ENCODE measurements at regions of chr4 and their contacts with region 1.

Region 1: DNA sequence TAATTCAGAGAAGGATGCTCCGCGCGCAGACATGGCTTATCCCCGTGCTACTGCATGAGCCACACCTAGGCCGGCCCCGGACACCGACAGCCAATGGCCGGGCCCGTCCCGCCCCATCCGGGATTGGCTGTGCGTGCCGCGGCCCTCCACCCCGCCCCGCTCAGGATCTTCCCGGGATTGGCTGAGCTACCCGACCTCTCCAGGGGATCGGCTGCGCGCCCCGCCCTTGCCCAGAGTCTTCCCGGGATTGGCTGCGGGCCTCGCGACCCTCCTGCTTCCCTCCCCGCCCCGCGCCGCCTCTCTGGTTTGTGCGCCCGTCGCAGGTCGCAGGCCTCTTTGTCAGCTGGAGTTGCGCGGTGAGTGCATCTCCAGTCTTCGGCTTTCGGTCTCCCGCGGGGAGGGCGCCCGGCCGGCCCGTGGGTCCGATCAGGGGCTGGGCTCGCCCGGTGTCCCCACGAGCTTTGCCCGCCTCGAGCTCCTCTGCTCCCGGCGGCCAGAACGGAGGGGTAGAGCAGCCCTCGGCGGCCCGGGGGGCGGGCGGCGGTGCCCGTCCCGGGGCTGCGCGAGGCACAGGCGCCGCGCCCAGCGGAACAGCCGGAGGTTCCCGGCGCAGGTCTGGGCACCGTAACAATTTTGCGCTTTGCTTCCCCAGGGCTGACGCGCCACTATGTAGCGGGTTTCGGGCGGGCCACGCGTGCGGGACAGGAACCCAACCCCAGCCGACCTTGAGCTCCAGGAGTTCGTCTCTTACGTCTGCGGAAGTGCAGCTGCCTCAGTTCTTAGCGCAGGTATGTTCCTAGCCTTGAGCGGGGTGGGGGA is 38.8 kb downstream of the ERVMER34-1 start:
- DNase-seq: peak; percentile 98 to 99
- H3K4me3 ChIP-seq: peak overlapping the region; percentile 93
- CTCF ChIP-seq: no peak
- POLR2A ChIP-seq: no peak

Region 2: DNA sequence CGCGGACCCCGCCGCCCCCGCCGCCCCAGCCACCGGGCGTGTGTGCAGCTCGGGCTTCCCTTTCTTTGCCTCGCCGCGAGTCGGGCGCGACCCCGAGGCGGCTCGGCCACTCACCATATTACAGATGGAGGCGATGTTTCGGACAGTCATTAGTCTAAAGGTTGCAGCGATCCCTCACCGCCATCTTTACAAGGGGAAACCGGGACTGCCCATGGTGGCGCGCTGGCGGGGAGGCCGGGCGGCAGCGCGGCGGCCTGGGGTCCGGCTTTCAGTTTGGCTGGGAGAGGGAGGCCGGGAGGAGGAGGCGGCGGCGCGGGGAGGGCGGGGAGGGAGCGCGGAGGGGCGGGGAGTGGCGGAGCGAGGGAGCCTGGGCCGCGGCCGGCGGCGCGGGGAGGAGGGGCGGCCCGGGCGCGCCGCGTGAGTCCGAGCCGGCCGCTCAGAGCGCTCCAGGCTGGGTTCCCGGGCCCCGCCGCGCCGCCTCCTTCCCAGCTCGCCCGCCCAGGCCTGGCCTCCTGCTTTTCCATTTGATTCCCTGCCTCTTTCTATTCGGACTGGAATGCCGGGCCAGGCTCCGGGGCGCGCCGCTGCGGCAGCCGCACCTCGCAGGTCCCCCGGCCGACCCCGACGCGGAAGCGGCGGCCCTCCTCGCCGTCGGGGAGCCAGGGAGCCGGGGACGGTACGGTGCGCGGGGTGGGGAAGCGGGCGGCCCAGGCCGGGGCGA is 53.2 kb before region 1 on chr4 and contains the start of gene USP46:
- intact Hi-C with region 1: loop called (anchors 10 kb)
- DNase-seq: peak; percentile 49 to 94
- H3K4me3 ChIP-seq: peak within 1 kb of the TSS; percentile 82
- CTCF ChIP-seq: no peak
- POLR2A ChIP-seq: no peak
- total RNA-seq, gene USP46: 7.5 to 16.7 (median 12.5) TPM